ENCODE measurements at regions of chr18 and their contacts with region 1.

Region 1: DNA sequence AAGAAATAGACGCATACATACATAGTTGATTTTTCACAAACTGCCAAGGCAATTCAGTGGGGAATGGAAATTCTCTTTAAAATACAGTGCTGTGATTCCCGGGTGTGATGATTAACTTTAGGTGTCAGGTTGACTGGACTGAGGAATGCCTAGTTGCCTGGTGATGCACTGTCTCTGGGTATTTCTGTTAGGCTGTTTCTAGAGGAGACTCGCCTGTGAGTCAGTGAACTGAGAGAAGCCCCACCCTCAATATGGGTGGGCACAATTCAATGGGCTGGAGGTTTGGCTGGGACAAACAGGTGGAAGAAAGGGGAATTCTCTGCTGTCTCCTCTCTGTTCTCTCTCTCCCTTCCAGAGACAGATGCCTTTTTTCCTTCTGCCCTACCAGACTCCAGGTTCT is 187.6 kb downstream of the ARHGAP28 start:
- DNase-seq: no peak
- ATAC-seq: no peak

Region 2: GRCh38 chr18:6781786-6782185 is 135.3 kb before region 1 on chr18:
- intact Hi-C with region 1: no loop called
- DNase-seq: no peak
- ATAC-seq: peak; percentile 78 to 84

Region 3: DNA sequence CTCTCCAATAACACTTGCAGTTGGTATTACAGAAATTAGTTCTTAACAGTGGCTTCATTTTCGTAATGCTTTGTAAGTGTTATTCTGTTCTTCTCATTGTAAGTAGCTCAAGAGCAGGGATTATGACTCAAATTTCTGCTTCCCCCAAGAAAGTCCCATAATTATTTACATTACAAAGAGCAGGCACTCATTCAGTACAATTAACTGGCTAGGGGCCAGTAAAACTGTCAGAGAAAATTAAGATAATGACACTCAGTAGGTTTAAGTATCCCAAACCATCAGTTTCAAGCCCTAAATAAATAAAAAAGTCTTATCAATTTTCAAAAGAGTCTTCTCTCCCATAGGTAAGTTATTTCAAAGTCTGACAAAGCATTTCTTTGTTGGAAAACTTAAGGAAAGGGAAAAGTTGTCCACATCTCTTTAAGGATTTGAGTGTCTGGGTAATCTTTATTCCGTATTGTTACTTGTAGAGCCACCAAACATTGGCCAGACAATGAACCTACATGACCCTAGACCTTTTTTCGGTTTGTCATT is 50.5 kb before region 1 on chr18:
- intact Hi-C with region 1: no loop called
- DNase-seq: no peak
- ATAC-seq: no peak

Region 4: GRCh38 chr18:7164323-7165004 is 247.4 kb after region 1 on chr18:
- intact Hi-C with region 1: loop called in 1 of 2 experiments (anchors 5 kb)
- DNase-seq: no peak
- ATAC-seq: peak; percentile 33 to 47

Region 5: DNA sequence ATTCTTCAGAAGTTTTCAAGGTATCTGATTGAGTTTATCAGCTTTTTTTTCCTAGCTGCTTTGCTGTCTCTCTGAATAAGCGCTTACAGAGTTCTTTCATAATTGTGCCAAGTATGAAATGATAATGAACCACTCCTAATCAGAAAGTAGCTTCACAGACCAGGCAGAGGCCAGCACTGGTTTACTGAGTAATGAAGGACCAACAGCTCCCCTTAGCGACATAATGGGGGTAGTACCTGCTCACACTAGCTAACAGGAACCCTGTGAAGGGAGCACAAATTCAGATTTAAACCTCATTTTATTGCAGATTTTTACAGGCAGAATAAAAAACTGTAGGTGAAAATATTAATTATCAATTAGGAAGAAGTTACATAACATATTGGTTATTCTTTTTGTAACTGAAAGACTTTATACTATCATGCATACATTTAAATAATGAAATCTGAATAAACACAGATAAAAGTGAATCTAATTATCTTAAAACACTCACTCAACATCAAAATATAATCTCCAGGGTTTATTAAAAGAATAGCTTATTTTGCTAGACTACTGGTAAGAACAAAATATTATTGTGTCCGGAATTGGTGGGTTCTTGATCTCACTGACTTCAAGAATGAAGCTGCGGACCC is 260.2 kb after region 1 on chr18:
- intact Hi-C with region 1: loop called (anchors 5 to 10 kb)
- DNase-seq: peak; percentile 44
- ATAC-seq: peak; percentile 95 to 99

Region 6: DNA sequence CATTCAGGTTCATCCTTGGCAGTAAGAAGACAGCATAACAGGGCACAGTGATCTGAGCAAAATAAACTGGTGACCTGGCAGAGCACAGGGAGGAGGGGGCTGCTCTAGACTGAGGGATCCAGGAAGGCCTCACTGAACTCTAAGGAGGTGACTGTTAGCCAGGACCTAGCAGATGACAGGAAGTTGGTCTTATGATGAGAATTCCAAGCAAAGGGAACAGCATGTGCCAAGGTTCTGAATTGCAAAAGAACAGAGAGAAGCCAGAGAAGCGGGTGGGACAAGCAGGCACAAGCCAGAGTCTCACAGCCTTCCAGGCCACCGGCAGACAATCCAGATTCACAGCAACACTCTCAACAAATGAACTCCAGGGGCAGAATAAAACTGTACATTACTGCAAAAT is 497.4 kb after region 1 on chr18:
- intact Hi-C with region 1: no loop called
- DNase-seq: peak; percentile 29
- ATAC-seq: peak; percentile 59 to 72